Activated T-helper 2 cell treated with anti-CD3 and anti-CD28 coated beads, Interferon-gamma antibody, Interleukin-2, Interleukin-4, amounts not matched to agents 10 μg/mL and 5 μg/mL and 100 μg/mL, durations not matched to agents 14 hours and 24 hours and 36 hours (primary cell): ENCODE measurements at regions of chr4 and their contacts with region 1.

Region 1: DNA sequence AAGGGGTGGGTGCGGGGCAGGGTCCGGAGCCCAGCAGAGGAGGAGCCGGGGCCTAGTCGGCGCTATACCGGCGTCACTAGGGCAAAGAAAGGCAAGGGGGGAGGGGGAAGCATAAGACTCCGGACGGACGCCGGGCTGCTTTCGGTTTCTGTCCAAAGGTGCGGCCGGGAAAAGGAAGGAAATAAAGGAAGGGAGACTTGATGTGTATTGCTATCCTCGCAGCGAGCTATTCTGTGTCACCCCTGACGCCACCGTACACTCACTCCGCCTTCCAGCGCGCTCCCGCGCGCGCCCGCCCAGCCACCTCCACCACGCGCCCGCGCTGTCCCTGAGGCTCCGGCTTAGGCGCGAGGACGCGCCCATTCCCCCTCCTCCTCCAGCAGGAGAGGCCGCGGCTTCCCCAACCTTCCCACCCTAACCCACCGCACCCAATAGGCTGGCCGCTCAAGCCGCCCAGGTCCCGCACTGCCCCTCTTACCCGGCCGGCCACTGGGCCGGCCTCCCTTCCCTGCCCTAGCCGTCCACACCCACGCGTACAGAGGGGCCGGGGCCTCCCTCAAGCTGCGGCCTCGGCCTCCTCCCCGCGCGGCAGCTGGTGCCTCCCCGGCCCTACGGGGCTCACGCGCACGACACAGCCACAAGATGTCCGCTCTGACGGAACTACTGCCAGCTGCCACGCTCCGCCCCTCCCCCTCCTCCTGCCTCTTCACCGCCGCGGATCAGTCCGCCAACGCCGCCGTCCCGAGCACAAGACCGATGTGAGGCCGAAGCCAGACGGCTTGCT is at the start of gene UBE2D3:
- DNase-seq: peak; percentile 95
- H3K4me3 Mint-ChIP-seq: no peak within 1 kb of the TSS
- H3K27ac Mint-ChIP-seq: no peak within 1 kb of the TSS
- H3K4me1 Mint-ChIP-seq: peaks cover 32% of the 10 kb centered on the region
- H3K27me3 Mint-ChIP-seq: no peaks in the 10 kb centered on the region
- total RNA-seq, gene UBE2D3: 429 and 432 TPM in 2 replicates

Region 2: DNA sequence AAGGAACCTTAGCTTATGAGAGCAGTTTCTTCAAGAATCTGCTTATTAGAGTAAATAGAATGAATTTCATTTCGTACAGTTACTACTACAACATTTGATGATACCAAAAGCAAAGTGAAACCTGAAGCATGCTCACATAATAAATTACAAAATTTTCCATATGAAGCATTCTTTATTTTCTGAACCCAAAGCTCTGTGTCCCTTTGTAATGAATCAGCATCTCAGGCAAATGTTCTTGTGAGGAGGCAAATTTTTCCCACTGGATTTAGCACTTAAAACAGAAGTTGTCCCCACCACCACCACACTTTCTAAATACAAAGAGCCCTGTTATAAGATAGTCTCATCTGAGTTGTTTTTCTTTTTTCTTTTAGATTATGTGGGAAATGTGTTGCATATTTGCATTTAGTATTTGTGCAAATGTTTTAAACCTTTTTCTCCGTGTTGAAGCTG is 396.6 kb before region 1 on chr4:
- intact Hi-C with region 1: loop called (anchors 5 kb)
- DNase-seq: no peak
- H3K4me3 Mint-ChIP-seq: peak overlapping the region; percentile 87
- H3K27ac Mint-ChIP-seq: peak overlapping the region; percentile 86
- H3K4me1 Mint-ChIP-seq: peaks cover 16% of the 10 kb centered on the region
- H3K27me3 Mint-ChIP-seq: peaks cover 6% of the 10 kb centered on the region

Region 3: GRCh38 chr4:102620697-102621497 is 206.2 kb before region 1 on chr4:
- intact Hi-C with region 1: loop called (anchors 5 kb)
- DNase-seq: no peak
- H3K4me3 Mint-ChIP-seq: no peak overlapping the region
- H3K27ac Mint-ChIP-seq: peak overlapping the region; percentile 58
- H3K4me1 Mint-ChIP-seq: peaks cover 49% of the 10 kb centered on the region
- H3K27me3 Mint-ChIP-seq: no peaks in the 10 kb centered on the region

Region 4: GRCh38 chr4:102809190-102809589 is 17.9 kb before region 1 on chr4:
- intact Hi-C with region 1: loop called (anchors 1 kb)
- DNase-seq: no peak
- H3K4me3 Mint-ChIP-seq: no peak overlapping the region
- H3K27ac Mint-ChIP-seq: peak overlapping the region; percentile 70
- H3K4me1 Mint-ChIP-seq: peaks cover 64% of the 10 kb centered on the region
- H3K27me3 Mint-ChIP-seq: no peaks in the 10 kb centered on the region

Region 5: DNA sequence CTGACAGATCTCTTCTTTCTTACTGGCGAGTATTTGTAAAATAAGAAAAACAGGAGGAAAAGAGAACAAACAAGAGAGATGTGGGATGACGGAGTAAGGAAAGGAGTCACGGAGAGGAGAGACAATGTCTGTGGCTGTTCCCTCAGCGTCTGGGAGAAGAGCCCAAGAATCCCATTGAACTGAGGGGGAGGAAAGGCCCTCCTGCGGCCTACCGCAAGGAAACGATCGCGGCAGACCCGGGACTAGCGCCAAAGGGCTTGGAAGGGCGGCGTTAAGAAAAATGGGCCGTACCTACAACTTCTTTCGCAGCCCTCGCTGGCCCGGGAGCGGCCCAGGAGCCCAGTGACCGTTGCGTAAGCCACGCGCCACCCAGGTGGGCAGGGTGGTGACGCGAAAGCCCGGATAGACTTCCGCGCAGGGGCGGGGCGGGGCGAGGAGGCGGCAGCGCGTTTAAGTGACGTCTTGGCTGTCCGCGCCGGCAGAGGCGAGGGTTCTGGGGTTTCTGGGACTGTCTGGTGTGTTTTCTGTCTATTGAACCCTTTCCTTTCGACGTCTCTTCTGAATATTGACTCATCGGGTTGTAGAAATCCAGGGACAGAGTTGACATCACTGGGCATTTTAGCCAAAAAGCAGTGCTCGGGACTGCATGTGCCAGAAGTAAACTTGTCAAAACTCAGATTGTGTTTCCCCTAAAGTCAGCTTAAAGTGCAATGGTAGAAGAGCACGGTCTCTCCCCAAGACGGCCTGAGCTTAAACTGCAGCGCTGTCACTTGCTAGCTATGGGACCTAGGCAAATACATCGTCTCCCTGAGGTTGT is 192.4 kb after region 1 on chr4 and contains the start of gene SLC9B1:
- intact Hi-C with region 1: loop called (anchors 1 kb)
- DNase-seq: peak; percentile 92
- H3K4me3 Mint-ChIP-seq: peak within 1 kb of the TSS; percentile 87
- H3K27ac Mint-ChIP-seq: peak within 1 kb of the TSS; percentile 94
- H3K4me1 Mint-ChIP-seq: peaks cover 18% of the 10 kb centered on the region
- H3K27me3 Mint-ChIP-seq: no peaks in the 10 kb centered on the region
- total RNA-seq, gene SLC9B1: 0.28 and 0.57 TPM in 2 replicates

Region 6: GRCh38 chr4:103054030-103054429 is 226.9 kb after region 1 on chr4:
- intact Hi-C with region 1: no loop called
- DNase-seq: no peak
- H3K4me3 Mint-ChIP-seq: no peak overlapping the region
- H3K27ac Mint-ChIP-seq: no peak overlapping the region
- H3K4me1 Mint-ChIP-seq: peaks cover 14% of the 10 kb centered on the region
- H3K27me3 Mint-ChIP-seq: no peaks in the 10 kb centered on the region